ENCODE measurements at regions of chr10 and their contacts with region 1.

Region 1: GRCh38 chr10:79316671-79317431 is 30.4 kb upstream of the PPIF start:
- DNase-seq: no peak
- H3K4me3 ChIP-seq: no peak overlapping the region
- H3K27ac ChIP-seq: peak overlapping the region; percentile 42
- H3K4me1 ChIP-seq: peaks cover 40% of the 10 kb centered on the region
- H3K27me3 ChIP-seq: no peaks in the 10 kb centered on the region
- CTCF ChIP-seq: no peak

Region 2: DNA sequence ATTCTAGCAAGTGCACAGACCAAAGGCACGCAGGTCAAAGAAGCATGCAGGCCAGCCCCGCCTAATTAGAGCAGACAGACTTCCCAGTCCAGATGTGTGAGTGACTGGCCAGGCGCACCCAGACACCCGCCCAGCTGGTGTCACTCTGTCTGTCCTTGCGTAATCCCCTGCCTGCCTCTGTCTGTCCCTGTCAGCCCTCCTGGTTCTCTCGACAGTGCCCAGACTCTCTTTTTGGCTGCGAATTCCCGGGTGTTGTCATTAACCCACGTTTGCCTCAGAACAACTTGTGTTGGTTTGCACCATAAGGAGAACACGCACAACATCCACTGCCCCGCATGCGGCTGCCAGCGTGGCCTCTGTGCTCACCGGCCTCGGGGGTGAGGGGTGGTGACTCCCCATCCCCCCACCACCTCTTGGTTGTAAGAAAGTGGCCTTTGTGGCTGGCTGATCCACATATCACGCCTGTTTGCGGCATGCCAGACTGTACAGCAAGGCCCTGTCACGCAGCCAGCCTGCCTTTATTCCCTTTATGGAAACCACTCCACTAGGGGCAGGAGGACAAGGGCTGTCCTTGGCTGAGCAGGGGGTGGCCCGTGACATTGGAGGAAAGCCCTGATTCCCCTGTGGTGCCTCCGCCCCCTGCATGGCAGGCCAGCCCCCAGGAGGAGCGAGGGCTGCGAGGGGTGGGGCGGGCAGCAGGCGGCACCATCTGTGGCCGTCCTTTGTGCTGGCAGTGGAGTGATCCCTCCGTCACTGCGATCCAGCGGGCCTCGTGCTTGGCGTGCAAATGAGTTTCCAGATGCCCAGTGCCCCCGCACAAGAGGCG is 42.4 kb before region 1 on chr10:
- CTCF ChIA-PET with region 1: no interaction called
- dilution Hi-C with region 1: loop called (anchors 5 kb)
- in situ Hi-C with region 1: no loop called
- intact Hi-C with region 1: no loop called
- DNase-seq: peak; percentile 30
- H3K4me3 ChIP-seq: no peak overlapping the region
- H3K27ac ChIP-seq: no peak overlapping the region
- H3K4me1 ChIP-seq: peaks cover 29% of the 10 kb centered on the region
- H3K27me3 ChIP-seq: no peaks in the 10 kb centered on the region
- CTCF ChIP-seq: no peak

Region 3: GRCh38 chr10:79333478-79333877 is 16.6 kb after region 1 on chr10:
- CTCF ChIA-PET with region 1: no interaction called
- dilution Hi-C with region 1: no loop called
- in situ Hi-C with region 1: no loop called
- intact Hi-C with region 1: loop called (anchors 1 kb)
- DNase-seq: peak; percentile 82
- H3K4me3 ChIP-seq: no peak overlapping the region
- H3K27ac ChIP-seq: peak overlapping the region; percentile 86
- H3K4me1 ChIP-seq: peaks cover 38% of the 10 kb centered on the region
- H3K27me3 ChIP-seq: no peaks in the 10 kb centered on the region
- CTCF ChIP-seq: no peak